Heart right ventricle (tissue), 16 donors: ENCODE measurements at regions of chr13 and their contacts with region 1.

Region 1: GRCh38 chr13:98033277-98034247 is 80.1 kb downstream of the IPO5 start:
- DNase-seq: peak in 1 of 2 donors; percentile 38
- ATAC-seq: peak in 4 of 8 donors; percentile 34 to 42 (median 38)
- H3K4me3 ChIP-seq: no peak overlapping the region
- H3K27ac ChIP-seq: no peak overlapping the region
- H3K4me1 ChIP-seq: no peaks in the 10 kb centered on the region
- H3K27me3 ChIP-seq: peaks cover 0 to 6% (median 0%) of the 10 kb centered on the region in 7 donors
- CTCF ChIP-seq: peak; percentile 17 to 61 (median 43)

Region 2: GRCh38 chr13:97986835-97987234 is 46.7 kb before region 1 on chr13:
- intact Hi-C with region 1: no loop called
- DNase-seq: no peak
- ATAC-seq: peak in 1 of 8 donors; percentile 11
- H3K4me3 ChIP-seq: no peak overlapping the region
- H3K27ac ChIP-seq: no peak overlapping the region
- H3K4me1 ChIP-seq: peaks cover 0 to 6% (median 0%) of the 10 kb centered on the region in 9 donors
- H3K27me3 ChIP-seq: no peaks in the 10 kb centered on the region
- CTCF ChIP-seq: no peak

Region 3: DNA sequence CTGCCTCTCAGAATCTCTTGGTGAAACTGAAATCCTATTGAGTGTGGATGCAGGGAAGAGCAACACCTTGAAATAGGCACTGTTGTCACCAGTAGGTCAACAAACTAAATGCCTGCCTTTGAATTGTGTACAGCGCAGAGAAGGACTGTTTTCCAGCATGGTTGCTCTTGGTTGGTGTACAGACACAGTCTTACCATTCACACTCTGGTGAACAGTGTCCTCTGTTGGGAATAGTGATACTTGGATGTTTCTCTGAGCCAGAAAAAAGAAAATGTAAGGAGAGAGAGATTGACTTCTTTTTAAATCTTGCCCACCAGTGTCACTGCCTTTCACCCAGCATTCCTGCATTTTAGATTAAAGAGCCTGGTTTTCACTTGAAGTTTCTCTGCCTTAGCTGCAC is 363.7 kb after region 1 on chr13:
- intact Hi-C with region 1: loop called in 2 of 10 experiments (anchors 10 kb)
- DNase-seq: no peak
- ATAC-seq: peak in 5 of 8 donors; percentile 44 to 73 (median 63)
- H3K4me3 ChIP-seq: no peak overlapping the region
- H3K27ac ChIP-seq: no peak overlapping the region
- H3K4me1 ChIP-seq: no peaks in the 10 kb centered on the region
- H3K27me3 ChIP-seq: no peaks in the 10 kb centered on the region
- CTCF ChIP-seq: peak in 6 of 9 donors; percentile 22 to 60 (median 42)

Region 4: DNA sequence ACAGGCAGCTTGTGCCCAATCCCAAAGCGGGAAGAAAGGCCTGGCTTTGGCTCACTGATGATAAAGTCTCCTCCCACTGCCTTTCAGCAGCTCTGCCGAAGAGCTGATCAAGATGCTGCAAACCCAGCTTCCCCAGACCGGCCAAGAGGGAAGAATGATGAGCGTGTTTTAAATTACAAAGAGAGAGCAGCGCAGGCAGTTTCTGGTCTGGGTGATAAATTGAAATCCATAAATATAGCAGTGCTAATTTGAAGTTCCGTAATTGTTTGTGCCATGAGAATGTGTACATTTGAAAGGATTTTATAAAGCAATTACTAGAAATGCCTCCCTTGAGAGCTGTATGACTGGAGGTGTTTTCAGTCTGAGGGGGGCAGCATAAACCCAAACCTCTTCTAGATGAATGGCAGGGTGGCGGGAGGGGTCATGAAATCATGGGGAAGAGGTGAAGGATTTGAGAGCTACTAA is 371.6 kb after region 1 on chr13:
- intact Hi-C with region 1: loop called in 1 of 10 experiments (anchors 10 kb)
- DNase-seq: no peak
- ATAC-seq: peak in 3 of 8 donors; percentile 44 to 76 (median 69)
- H3K4me3 ChIP-seq: no peak overlapping the region
- H3K27ac ChIP-seq: no peak overlapping the region
- H3K4me1 ChIP-seq: no peaks in the 10 kb centered on the region
- H3K27me3 ChIP-seq: no peaks in the 10 kb centered on the region
- CTCF ChIP-seq: peak in 2 of 9 donors; percentile 2 to 16

Region 5: DNA sequence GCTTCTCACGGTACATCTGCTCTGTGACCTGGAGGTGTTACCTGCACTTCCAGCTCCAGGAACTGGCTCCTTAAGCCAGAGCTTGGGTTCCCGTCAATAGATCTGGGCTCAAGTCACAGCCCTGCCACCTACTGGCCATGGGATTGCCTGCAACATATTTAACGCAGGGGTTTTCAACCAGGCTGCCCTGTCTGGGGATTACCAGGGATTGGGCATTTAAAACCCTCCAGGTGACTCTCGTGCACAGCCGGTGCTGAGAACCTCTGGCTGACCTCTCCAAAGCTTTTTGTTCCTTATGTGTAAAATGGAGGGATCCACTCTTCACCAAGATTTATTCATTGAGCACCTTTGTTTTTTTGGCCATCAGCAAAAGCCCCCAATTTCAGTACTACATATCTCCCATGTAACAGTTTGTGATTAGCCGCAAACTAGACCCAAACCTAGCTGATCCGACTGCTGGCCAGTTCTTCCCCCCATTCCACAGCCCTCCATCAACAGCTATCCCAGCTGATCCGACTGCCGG is 620.0 kb after region 1 on chr13:
- intact Hi-C with region 1: loop called in 1 of 10 experiments (anchors 10 kb)
- DNase-seq: peak; percentile 64 to 68
- ATAC-seq: peak; percentile 78 to 90 (median 87)
- H3K4me3 ChIP-seq: no peak overlapping the region
- H3K27ac ChIP-seq: no peak overlapping the region
- H3K4me1 ChIP-seq: peaks cover 0 to 19% (median 0%) of the 10 kb centered on the region in 9 donors
- H3K27me3 ChIP-seq: peaks cover 0 to 3% (median 0%) of the 10 kb centered on the region in 7 donors
- CTCF ChIP-seq: peak; percentile 86 to 93 (median 89)

Region 6: GRCh38 chr13:98664039-98664438 is 630.5 kb after region 1 on chr13:
- intact Hi-C with region 1: loop called in 4 of 10 experiments (anchors 5 to 10 kb)
- DNase-seq: no peak
- ATAC-seq: no peak
- H3K4me3 ChIP-seq: no peak overlapping the region
- H3K27ac ChIP-seq: no peak overlapping the region
- H3K4me1 ChIP-seq: no peaks in the 10 kb centered on the region
- H3K27me3 ChIP-seq: no peaks in the 10 kb centered on the region
- CTCF ChIP-seq: no peak